ENCODE measurements at regions of chr3 and their contacts with region 1.

Region 1: GRCh38 chr3:48137425-48137999 is 50.7 kb downstream of the CDC25A start:
- DNase-seq: no peak
- ATAC-seq: no peak
- H3K4me3 ChIP-seq: no peak overlapping the region
- H3K27ac ChIP-seq: no peak overlapping the region
- H3K4me1 ChIP-seq: no peaks in the 10 kb centered on the region
- H3K27me3 ChIP-seq: no peaks in the 10 kb centered on the region
- CTCF ChIP-seq: no peak

Region 2: DNA sequence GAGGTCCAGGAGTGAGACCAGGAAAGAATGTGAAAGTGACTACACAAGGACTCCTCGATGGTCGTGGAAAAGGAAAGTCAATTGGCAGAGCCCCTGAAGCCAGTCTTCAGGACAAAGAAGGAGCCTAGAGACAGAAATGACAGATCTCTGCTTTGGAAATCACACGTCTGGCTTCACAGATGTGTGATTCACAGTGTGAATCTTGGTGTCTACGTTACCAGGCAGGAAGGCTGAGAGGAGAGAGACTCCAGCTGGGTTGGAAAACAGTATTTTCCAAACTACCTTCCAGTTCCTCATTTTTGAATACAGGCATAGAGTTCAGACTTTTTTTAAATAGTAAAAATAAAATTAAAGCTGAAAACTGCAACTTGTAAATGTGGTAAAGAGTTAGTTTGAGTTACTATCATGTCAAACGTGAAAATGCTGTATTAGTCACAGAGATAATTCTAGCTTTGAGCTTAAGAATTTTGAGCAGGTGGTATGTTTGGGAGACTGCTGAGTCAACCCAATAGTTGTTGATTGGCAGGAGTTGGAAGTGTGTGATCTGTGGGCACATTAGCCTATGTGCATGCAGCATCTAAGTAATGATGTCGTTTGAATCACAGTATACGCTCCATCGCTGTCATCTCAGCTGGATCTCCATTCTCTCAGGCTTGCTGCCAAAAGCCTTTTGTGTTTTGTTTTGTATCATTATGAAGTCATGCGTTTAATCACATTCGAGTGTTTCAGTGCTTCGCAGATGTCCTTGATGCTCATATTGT is 1777.6 kb before region 1 on chr3:
- CTCF ChIA-PET with region 1: no interaction called
- POLR2A ChIA-PET with region 1: no interaction called
- in situ Hi-C with region 1: no loop called
- intact Hi-C with region 1: no loop called
- DNase-seq: no peak
- ATAC-seq: no peak
- H3K4me3 ChIP-seq: no peak overlapping the region
- H3K27ac ChIP-seq: no peak overlapping the region
- H3K4me1 ChIP-seq: no peaks in the 10 kb centered on the region; the same call in 1 of the 2 replicates
- H3K27me3 ChIP-seq: peaks cover 7% of the 10 kb centered on the region
- CTCF ChIP-seq: no peak

Region 3: DNA sequence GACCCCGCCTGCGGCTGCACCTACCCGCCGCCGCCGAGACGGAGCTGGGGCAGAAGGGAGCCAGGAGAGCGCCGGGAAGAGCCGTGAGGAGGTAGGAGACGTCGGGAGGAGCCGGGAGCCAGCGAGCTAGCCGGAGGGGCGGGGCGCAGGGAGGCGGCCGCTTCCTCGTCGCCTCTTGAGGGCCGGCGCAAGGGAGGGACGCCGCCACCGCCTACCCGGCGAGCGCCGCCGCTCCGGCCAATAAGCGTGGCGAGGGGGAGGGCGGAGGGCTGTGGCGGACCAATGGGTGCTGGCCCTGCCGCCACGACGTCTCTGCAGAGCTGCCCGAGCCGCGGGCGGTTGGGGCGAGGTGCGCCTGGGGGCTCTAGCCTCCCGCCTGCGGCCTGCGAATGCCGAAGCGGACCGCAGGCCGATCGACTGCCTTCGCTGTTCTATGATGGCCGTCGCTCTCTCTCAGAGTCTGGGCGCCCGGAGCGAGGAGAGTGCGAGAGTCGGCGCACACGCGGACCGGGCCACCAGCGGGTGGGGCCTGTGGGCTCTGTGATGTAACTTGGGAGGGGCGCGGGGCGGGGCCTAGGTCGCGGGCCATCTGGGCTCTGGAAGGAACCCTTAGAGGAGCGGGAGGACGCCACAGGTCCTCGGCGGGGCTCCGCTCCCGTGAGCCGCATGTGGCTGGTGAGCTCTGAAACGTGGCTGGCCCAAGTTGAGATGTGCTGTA is 48.6 kb before region 1 on chr3:
- CTCF ChIA-PET with region 1: interaction called, 16 read pairs
- POLR2A ChIA-PET with region 1: no interaction called
- in situ Hi-C with region 1: no loop called
- intact Hi-C with region 1: no loop called
- DNase-seq: peak; percentile 68
- ATAC-seq: peak; percentile 98
- H3K4me3 ChIP-seq: peak overlapping the region; percentile 85 to 86
- H3K27ac ChIP-seq: peak overlapping the region; percentile 82
- H3K4me1 ChIP-seq: peaks cover 13% of the 10 kb centered on the region
- H3K27me3 ChIP-seq: no peaks in the 10 kb centered on the region
- CTCF ChIP-seq: no peak